Prostate gland (tissue), 2 donors: ENCODE measurements at regions of chr2 and their contacts with region 1.

Region 1: DNA sequence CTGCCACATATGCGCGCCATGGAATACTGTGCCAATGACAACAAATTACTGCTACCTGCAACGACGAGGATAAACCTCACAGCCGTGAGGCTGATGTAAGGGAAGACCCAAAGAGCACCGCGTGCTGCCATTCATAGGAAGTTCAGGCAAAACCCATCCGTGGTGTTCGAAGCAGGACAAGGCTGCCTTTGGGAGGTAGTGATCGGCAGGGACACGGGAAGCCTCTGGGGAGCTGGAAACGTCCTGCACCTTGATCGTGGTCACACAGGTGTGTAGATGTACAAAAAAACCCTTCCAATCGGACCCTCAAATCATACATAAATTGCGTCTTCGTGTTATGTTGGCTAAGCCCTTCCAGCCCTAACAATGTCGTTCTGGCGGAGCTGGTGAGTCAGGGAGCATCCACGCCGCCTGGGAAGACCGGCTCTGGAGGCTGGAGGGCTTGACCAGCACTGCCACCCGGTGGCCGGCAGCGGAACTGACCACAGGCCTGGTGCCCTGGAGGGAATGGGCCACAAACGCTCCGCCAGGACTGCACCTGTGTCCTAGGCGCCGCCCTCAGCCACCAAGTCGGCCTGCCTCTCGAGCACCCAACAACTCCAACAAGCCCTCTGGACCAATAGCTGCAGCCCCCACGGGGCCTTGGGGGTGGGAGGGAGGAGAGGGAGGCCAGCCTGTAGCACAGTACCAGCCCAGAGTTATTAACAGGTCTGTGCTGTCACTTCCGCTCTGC is 4.1 kb upstream of the NEURL3 start:
- DNase-seq: peak; percentile 86
- H3K4me3 ChIP-seq: no peak overlapping the region
- H3K27ac ChIP-seq: no peak overlapping the region
- H3K4me1 ChIP-seq: no peaks in the 10 kb centered on the region
- H3K27me3 ChIP-seq: no peaks in the 10 kb centered on the region
- CTCF ChIP-seq: peak; percentile 95 to 98 (median 98)
- POLR2A ChIP-seq: no peak

Region 2: GRCh38 chr2:96305091-96305978 is 203.9 kb before region 1 on chr2 and contains the start of gene SNRNP200:
- intact Hi-C with region 1: loop called (anchors 10 kb)
- DNase-seq: peak; percentile 84
- H3K4me3 ChIP-seq: peak within 1 kb of the TSS; percentile 67 to 72
- H3K27ac ChIP-seq: peak within 1 kb of the TSS; percentile 72 to 77
- H3K4me1 ChIP-seq: peaks cover 8% of the 10 kb centered on the region
- H3K27me3 ChIP-seq: no peaks in the 10 kb centered on the region
- CTCF ChIP-seq: peak in 1 of 4 experiments; percentile 24
- POLR2A ChIP-seq: peak; percentile 62
- total RNA-seq, gene SNRNP200: 117 to 148 TPM

Region 3: DNA sequence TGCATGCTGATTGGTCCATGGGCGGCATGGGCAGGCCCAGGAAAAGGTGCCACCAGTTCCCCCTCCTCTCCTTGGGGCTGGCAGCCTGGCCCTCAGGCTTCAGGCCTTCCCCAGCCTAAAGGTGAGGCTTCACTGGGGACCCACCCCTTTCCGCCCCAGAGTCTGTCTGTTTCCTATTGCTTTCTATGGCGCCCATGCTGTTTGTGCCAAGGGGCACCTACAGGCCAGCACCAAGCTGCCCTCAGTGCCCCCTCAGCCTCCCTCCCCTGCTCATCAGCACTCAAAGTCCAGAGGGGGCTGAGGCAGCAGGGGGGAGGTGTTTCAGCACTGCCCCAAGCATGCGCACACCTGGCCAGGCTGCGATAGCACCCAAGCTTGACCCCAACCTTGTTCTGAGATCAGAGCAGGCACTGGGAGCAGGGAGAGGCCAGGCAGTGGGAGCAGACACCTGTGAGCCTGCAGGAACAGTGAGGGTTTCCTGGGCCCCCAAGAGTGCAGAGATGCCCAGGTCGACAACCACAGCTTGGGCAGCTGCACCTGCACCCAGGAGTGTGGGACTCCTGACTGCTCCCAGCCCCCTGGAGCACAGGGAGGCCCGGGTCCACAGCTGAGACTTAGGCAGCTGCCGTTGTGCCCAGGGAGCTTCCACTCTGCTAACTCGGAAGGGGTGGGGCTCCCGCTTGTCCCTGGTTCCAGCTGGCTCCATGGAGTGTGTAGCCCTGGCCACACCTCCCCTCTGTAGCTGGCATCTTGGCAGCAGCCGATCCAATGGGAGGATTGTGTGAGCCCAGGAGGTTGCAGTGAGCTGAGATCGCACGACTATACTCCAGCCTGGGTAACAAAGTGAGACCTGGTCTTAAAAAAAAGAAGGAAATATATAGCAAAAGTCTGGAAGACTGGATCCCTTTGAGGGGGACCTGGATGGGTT is 104.6 kb before region 1 on chr2:
- intact Hi-C with region 1: loop called (anchors 2 kb)
- DNase-seq: peak; percentile 66
- H3K4me3 ChIP-seq: no peak overlapping the region
- H3K27ac ChIP-seq: no peak overlapping the region
- H3K4me1 ChIP-seq: no peaks in the 10 kb centered on the region
- H3K27me3 ChIP-seq: no peaks in the 10 kb centered on the region
- CTCF ChIP-seq: no peak
- POLR2A ChIP-seq: no peak

Region 4: GRCh38 chr2:96463119-96463518 is 46.2 kb before region 1 on chr2:
- intact Hi-C with region 1: no loop called
- DNase-seq: no peak
- H3K4me3 ChIP-seq: no peak overlapping the region
- H3K27ac ChIP-seq: no peak overlapping the region
- H3K4me1 ChIP-seq: no peaks in the 10 kb centered on the region
- H3K27me3 ChIP-seq: no peaks in the 10 kb centered on the region
- CTCF ChIP-seq: no peak
- POLR2A ChIP-seq: no peak

Region 5: DNA sequence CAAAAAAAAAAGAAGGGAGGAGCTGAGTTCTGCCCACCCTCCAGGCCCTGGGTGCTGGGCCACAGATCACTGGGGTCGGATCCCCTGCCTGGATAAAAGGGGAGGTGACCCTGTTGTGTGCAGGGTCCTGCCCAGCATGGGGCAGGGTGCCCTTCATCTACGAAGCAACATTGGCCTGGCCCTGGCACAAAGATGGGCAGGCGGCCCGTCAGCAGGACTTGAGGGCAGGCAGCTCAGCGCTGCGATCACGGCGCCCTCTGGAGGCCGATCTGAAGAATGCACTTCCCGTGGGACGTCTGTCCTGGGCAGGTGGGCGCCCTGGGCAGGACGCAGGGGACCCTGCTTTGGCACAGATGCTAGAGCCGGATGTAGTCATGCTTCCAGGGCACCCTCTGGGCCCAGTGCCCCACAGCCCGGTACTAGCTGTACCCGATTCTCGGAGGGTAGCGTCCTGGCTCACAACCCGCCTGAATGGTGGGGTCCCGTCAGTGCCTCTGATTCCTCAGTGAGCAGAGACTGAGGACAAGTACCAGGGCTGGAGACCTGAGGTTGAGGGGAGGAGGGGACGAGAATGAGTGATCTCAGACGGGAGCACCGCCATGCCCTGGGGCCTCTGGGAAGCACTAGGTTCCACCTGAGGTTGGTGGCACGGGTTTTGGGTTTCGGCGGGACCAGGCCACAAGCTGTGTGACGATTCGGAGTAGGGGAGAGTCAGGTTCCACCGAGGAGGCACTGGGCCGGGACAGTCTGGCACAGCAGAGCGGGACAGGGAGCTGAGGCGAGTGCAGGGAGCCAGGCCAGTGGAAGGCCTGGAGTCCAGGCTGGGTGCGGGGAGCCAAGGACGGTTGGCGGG is 45.2 kb after region 1 on chr2:
- intact Hi-C with region 1: loop called (anchors 5 kb)
- DNase-seq: peak; percentile 57
- H3K4me3 ChIP-seq: no peak overlapping the region
- H3K27ac ChIP-seq: no peak overlapping the region
- H3K4me1 ChIP-seq: no peaks in the 10 kb centered on the region
- H3K27me3 ChIP-seq: no peaks in the 10 kb centered on the region
- CTCF ChIP-seq: peak; percentile 87 to 95 (median 89)
- POLR2A ChIP-seq: no peak